ENCODE measurements at regions of chr2 and their contacts with region 1.

Region 1: DNA sequence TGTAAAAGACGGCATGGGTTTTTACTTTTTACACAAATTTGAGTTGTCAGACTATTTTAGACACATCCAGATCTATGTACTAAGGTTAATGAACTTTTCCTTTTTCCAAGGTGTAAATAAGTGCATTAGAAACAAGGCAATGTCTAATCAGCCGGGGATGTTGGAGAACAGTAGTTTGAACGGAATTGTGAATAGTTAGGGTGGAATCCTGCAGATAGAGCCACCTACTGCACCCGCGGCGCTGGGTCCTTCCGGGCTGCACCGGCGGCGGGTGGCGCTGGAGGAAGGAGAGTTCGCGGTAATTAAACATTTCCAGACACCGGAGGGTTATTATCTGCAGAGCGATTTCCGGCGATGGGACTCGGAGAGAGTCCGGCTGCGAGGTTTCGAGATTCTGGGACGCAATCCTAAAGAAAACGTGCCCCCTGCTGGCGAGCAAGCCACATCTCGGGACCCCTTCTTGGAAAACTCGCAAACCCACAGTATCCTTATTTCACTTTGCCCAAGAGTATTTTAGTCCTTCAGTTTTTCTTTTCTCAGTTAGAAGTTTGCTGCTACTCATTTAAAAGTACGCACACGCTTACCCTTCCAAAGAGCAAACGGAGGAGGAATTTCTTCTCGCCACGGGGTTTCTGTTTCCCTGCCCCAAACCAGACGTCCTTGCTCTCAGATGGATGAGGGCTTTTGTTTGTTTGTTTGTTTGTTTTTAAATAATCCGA is 4.5 kb upstream of the OSR1 start:
- DNase-seq: peak; percentile 82
- ATAC-seq: peak; percentile 57

Region 2: DNA sequence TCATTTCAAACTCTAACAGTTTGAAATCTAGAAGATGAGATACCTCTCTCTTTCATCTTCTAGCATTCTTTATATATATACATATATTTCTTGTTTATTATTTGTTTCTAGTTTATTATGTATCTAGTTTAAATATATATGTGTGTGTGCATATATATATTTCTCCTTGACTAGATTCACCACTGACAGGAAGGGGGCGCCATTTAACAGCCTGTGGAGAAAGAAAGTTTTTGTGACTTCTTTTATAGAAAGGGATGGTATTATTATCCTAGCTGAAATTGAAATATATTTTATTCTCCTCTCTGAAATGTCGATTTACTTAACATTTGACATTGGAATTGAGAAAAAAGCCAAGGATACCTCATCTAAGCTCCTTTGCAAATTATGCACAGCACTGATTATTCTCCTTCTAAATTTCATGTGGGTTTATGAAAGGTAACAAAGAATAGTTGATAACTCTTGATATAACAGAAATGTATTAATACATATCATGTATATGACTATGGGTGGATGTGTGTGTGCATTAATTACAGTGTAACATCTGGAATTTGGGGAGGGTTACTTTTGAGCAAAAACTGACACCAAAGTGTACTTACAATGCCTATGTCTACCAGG is 612.9 kb before region 1 on chr2:
- intact Hi-C with region 1: loop called (anchors 2 kb)
- DNase-seq: no peak
- ATAC-seq: peak; percentile 52

Region 3: GRCh38 chr2:19785447-19785846 is 422.5 kb after region 1 on chr2:
- intact Hi-C with region 1: no loop called
- DNase-seq: no peak
- ATAC-seq: peak; percentile 90

Region 4: GRCh38 chr2:19863303-19864041 is 500.6 kb after region 1 on chr2:
- intact Hi-C with region 1: loop called (anchors 5 kb)
- DNase-seq: peak; percentile 84
- ATAC-seq: peak; percentile 89